ENCODE measurements at regions of chr18 and their contacts with region 1.

Region 1: GRCh38 chr18:23067236-23067635 is 68.0 kb upstream of the CABLES1 start:
- DNase-seq: no peak
- ATAC-seq: no peak
- H3K4me3 ChIP-seq: no peak overlapping the region
- H3K27ac ChIP-seq: no peak overlapping the region
- H3K4me1 ChIP-seq: peaks cover 4% of the 10 kb centered on the region
- H3K27me3 ChIP-seq: no peaks in the 10 kb centered on the region
- CTCF ChIP-seq: no peak

Region 2: GRCh38 chr18:21820035-21820810 is 1247.0 kb before region 1 on chr18:
- CTCF ChIA-PET with region 1: no interaction called
- POLR2A ChIA-PET with region 1: interaction called, 13 read pairs
- in situ Hi-C with region 1: no loop called
- intact Hi-C with region 1: no loop called
- DNase-seq: no peak
- ATAC-seq: no peak
- H3K4me3 ChIP-seq: no peak overlapping the region
- H3K27ac ChIP-seq: no peak overlapping the region
- H3K4me1 ChIP-seq: no peaks in the 10 kb centered on the region
- H3K27me3 ChIP-seq: no peaks in the 10 kb centered on the region
- CTCF ChIP-seq: peak; percentile 62; the same call in 1 of the 2 replicates

Region 3: DNA sequence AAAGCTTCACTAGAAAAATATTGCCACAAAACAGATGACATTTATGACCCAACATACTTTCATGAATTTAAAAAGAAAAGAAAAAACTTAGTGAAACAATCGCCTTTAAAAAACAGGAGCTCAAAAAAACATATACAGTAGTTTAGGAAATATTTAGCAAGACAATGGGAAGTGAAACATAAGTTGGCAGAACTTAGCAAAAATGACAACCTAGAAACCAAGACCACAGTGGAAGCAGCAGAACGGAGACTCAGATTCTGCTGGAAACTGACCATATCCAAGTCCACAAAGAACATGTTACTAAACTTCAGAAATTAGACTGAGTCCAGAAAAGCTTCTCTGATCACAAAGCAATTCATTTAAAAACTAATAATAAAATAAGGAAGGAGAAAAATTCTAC is 607.7 kb before region 1 on chr18:
- CTCF ChIA-PET with region 1: no interaction called
- POLR2A ChIA-PET with region 1: no interaction called
- in situ Hi-C with region 1: no loop called
- intact Hi-C with region 1: no loop called
- DNase-seq: no peak
- ATAC-seq: no peak
- H3K4me3 ChIP-seq: no peak overlapping the region
- H3K27ac ChIP-seq: no peak overlapping the region
- H3K4me1 ChIP-seq: no peaks in the 10 kb centered on the region
- H3K27me3 ChIP-seq: 0 out of 2 replicates have a peak, but pooled peaks cover 2% of the 10 kb centered on the region
- CTCF ChIP-seq: no peak

Region 4: GRCh38 chr18:23012249-23012648 is 55.0 kb before region 1 on chr18:
- CTCF ChIA-PET with region 1: no interaction called
- POLR2A ChIA-PET with region 1: no interaction called
- in situ Hi-C with region 1: no loop called
- intact Hi-C with region 1: loop called (anchors 10 kb)
- DNase-seq: no peak
- ATAC-seq: no peak
- H3K4me3 ChIP-seq: no peak overlapping the region
- H3K27ac ChIP-seq: no peak overlapping the region
- H3K4me1 ChIP-seq: no peaks in the 10 kb centered on the region
- H3K27me3 ChIP-seq: no peaks in the 10 kb centered on the region
- CTCF ChIP-seq: no peak

Region 5: GRCh38 chr18:23106580-23106979 is 39.3 kb after region 1 on chr18:
- CTCF ChIA-PET with region 1: no interaction called
- POLR2A ChIA-PET with region 1: no interaction called
- in situ Hi-C with region 1: no loop called
- intact Hi-C with region 1: no loop called
- DNase-seq: peak; percentile 93
- ATAC-seq: peak; percentile 91
- H3K4me3 ChIP-seq: no peak overlapping the region; a peak in 1 of 4 replicates
- H3K27ac ChIP-seq: peak overlapping the region; percentile 89
- H3K4me1 ChIP-seq: peaks cover 57% of the 10 kb centered on the region
- H3K27me3 ChIP-seq: no peaks in the 10 kb centered on the region
- CTCF ChIP-seq: no peak

Measured in Panc1 (cell line).